ENCODE measurements at regions of chr4 and their contacts with region 1.

Region 1: DNA sequence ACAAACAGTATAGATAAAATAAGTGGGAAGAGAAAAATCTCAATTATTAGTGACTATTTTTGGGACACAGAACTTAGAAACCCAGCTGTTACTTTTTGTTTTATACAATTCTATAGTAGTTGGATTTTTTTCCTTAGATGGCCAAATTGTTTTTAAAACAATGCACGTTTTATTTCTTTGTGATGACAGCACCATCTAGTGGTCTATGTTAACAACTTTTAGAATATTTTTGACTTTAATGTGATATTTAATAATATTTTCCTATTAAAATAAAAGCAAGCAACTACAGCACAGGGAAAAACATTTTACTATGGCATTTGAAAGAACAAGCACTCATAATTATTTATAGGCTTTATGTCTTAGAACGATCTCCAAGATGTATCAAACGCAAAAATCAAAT is 5.6 kb upstream of the SMIM31 start:
- DNase-seq: no peak
- H3K4me3 ChIP-seq: no peak overlapping the region
- H3K27ac ChIP-seq: no peak overlapping the region
- H3K4me1 ChIP-seq: peaks cover 0 to 3% (median 0%) of the 10 kb centered on the region in 4 donors
- H3K27me3 ChIP-seq: no peaks in the 10 kb centered on the region
- CTCF ChIP-seq: peak; percentile 23 to 52 (median 38)
- EP300 ChIP-seq: no peak
- POLR2A ChIP-seq: no peak

Region 2: DNA sequence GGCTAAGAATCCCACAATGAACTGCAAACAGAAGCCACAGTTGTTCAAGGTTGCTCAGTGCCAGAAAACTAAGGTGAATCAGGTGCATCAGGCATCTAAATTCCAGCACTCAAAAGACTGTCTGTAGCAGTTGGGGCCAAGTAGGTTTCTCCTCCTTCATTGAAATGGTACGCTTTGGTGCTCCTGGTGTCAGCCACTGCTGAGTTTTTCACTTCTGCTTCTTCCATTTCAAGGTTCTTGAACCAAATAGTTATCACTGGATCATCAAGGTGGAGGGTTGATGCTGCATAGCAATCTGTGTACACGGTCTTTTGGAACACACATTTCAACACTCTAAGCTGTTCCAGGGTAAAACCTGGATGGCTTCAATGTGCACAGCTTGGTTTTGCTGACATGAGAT is 1179.5 kb before region 1 on chr4:
- in situ Hi-C with region 1: loop called in 1 of 4 experiments (anchors 25 kb)
- intact Hi-C with region 1: loop called (anchors 5 kb)
- DNase-seq: no peak
- H3K4me3 ChIP-seq: no peak overlapping the region
- H3K27ac ChIP-seq: no peak overlapping the region
- H3K4me1 ChIP-seq: no peaks in the 10 kb centered on the region
- H3K27me3 ChIP-seq: no peaks in the 10 kb centered on the region
- CTCF ChIP-seq: no peak
- EP300 ChIP-seq: no peak
- POLR2A ChIP-seq: no peak

Measured in transverse colon (tissue), 4 donors.